ENCODE measurements at regions of chr1 and their contacts with region 1.

Region 1: DNA sequence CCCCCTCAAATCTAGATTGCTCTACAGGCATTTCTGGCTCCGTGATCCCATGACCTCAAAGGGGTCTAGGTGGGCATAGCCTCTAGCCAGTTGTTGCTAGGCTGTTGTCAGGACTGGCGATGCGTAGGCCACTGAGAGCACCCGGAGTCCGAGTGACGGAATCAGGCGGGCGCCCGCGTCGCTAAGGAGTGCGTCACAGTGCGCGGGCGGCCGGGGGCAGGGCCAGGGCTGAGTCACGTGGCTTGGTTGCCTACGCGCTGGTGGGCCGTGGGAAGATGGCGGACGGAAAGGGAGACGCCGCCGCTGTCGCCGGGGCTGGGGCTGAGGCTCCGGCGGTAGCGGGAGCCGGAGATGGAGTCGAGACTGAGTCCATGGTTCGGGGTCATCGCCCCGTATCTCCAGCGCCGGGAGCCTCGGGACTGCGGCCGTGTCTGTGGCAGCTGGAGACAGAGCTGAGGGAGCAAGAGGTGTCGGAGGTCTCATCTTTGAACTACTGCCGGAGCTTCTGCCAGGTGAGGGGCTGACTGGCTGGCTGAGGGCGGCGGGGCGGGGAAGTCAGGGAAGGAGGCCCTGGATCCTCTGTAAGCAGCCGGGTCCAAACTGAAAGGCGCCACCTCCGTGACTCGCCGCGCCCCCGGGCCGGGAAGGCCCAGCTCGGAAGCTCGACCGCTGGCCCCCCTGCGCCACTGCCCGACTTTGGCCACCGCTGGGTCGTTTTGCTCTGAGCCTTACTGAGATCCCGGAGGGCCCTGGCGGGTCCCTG is at the start of gene RLF:
- DNase-seq: peak; percentile 90 to 97 (median 94)
- H3K4me3 ChIP-seq: peak within 1 kb of the TSS; percentile 67 to 99 (median 94)
- H3K27ac ChIP-seq: peak within 1 kb of the TSS; percentile 69 to 98 (median 93)
- H3K27me3 ChIP-seq: no peaks in the 10 kb centered on the region
- CTCF ChIP-seq: peak in 20 of 56 donors; percentile 4 to 43 (median 24)
- total RNA-seq, gene RLF: 21.4 to 38.0 (median 28.7) TPM

Region 2: GRCh38 chr1:39876144-39876543 is 285.2 kb before region 1 on chr1:
- intact Hi-C with region 1: no loop called
- DNase-seq: no peak
- H3K4me3 ChIP-seq: no peak overlapping the region
- H3K27ac ChIP-seq: peak overlapping the region in 39 of 59 donors; percentile 7 to 93 (median 86)
- H3K27me3 ChIP-seq: no peaks in the 10 kb centered on the region
- CTCF ChIP-seq: no peak

Region 3: GRCh38 chr1:40096977-40097782 is 64.1 kb before region 1 on chr1 and contains the start of gene PPT1:
- intact Hi-C with region 1: loop called (anchors 5 to 10 kb)
- DNase-seq: peak; percentile 79 to 92 (median 87)
- H3K4me3 ChIP-seq: peak within 1 kb of the TSS; percentile 58 to 97 (median 81)
- H3K27ac ChIP-seq: peak within 1 kb of the TSS; percentile 66 to 97 (median 85)
- H3K27me3 ChIP-seq: no peaks in the 10 kb centered on the region
- CTCF ChIP-seq: peak in 52 of 56 donors; percentile 7 to 66 (median 40)
- total RNA-seq, gene PPT1: 72.4 to 166 (median 118) TPM

Region 4: DNA sequence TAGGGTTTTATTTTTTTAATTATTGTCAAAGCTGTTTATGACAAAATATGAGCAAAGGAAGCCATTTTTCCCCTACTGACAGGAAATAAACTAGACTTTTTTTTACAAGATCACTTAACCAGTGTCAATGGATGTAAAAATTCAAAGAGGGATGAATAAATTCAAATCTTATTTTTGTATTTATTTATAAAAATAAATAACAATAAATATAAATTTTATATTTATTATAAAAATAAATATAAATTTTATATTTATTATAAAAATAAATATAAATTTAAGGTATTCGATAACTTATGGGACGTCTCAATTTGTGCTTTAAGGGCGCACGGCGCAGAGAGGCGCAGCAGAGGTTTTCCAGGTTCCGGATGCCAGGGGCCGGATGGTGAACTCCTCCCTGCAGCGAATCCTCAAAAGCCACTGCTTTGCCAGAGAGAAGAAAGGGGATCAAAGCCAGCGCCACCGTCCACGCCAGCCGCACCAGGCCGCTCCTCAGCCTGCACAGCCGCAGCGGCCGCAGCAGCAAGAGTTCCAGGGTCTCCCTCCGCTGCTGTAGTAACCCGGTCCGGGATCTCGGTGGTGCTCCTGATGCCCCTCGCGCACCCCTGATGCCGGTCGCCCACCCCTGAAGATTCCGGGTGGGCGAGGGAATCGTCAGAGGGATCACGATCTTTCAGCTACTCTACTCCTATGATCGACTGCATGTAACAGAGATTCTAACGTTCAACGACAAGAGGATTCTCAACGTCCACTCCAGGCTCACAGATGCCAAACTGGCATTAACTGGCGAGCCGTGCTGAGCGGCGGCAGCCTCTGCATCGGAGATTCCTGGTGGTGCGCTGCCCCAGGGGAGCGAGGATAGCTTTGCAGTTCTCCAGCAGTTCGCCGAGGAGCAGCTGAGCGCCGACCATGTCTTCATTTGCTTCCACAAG is 28.7 kb before region 1 on chr1:
- intact Hi-C with region 1: no loop called
- DNase-seq: peak in 2 of 10 donors; percentile 11 to 43
- H3K4me3 ChIP-seq: peak overlapping the region in 58 of 59 donors; percentile 19 to 71 (median 47)
- H3K27ac ChIP-seq: peak overlapping the region in 1 of 59 donors; percentile 38
- H3K27me3 ChIP-seq: peaks cover 0 to 10% (median 0%) of the 10 kb centered on the region in 45 donors
- CTCF ChIP-seq: no peak

Region 5: DNA sequence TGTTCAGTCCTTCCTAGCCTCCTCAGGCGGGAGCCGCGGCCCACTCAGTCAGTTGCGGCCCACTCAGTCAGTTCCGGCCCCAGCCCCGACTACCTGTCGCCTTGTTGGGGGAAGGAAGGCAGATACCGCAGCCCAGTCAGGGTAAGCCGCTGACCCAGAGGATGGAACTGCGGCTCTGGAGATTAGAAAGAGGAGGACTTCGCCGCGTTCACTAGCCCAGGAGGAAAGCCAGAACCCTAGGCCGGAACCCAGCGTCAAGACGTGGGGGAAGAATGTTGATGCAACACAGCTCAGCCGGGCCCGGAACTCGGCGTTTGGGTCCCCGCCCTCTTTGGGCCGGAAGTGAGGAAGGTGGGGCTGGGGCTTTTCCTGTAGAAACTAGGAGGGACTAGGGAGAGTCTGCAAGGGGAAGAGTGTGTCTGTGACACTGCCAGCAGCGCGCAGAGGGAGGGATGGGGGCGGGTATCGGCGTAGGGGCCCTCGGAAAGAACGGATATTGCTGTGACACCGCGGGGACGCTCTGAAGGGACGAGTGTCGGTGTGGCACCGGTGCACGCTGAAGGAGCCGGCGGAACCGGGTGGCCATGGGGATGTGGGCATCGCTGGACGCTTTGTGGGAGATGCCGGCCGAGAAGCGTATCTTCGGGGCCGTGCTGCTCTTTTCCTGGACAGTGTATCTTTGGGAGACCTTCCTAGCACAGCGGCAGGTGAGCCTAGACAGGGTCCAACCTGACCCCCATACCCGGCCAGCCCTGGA is 96.6 kb after region 1 on chr1 and contains the start of gene ZMPSTE24:
- intact Hi-C with region 1: loop called (anchors 5 kb)
- DNase-seq: peak; percentile 91 to 97 (median 95)
- H3K4me3 ChIP-seq: peak within 1 kb of the TSS; percentile 65 to 100 (median 91)
- H3K27ac ChIP-seq: peak within 1 kb of the TSS; percentile 75 to 99 (median 93)
- H3K27me3 ChIP-seq: no peaks in the 10 kb centered on the region
- CTCF ChIP-seq: peak in 39 of 56 donors; percentile 4 to 60 (median 25)
- total RNA-seq, gene ZMPSTE24: 20.8 to 36.8 (median 28.6) TPM

Region 6: DNA sequence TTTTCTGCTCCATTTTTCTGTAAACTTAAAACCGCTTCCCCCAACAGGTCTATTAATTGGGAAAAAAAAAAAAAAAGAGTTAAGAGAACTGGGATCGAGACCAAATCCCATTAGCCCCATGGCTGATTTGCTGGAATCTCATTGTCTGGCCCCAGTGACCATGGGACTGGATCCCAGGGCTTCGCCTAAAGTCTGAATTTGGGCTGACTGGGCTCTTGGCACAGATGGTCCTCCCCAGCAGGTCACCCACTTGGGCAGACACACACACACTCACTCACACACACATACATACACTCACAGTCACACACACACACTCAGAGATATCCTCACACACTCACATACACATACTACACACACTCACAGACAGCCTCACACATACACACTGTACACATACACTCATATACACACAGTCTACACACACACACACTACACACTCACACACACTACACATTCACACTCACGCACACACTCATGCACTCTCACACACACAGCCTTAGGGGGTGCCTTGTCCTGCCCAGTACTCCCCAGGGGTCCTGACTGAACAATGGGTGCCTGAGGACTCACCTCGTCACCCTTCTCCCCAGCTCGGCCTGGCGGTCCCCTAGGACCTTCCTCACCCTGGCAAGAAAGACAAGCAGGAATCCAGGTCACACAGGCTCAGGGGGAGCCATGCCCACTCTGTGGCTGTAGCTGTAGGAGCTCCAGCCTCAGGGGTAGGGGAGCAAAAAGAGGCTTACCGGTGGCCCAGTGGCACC is 148.2 kb after region 1 on chr1:
- intact Hi-C with region 1: loop called (anchors 2 kb)
- DNase-seq: peak in 3 of 10 donors; percentile 36 to 48 (median 47)
- H3K4me3 ChIP-seq: no peak overlapping the region
- H3K27ac ChIP-seq: peak overlapping the region in 47 of 59 donors; percentile 12 to 95 (median 85)
- H3K27me3 ChIP-seq: peaks cover 0 to 1% (median 0%) of the 10 kb centered on the region in 45 donors
- CTCF ChIP-seq: no peak

Region 7: DNA sequence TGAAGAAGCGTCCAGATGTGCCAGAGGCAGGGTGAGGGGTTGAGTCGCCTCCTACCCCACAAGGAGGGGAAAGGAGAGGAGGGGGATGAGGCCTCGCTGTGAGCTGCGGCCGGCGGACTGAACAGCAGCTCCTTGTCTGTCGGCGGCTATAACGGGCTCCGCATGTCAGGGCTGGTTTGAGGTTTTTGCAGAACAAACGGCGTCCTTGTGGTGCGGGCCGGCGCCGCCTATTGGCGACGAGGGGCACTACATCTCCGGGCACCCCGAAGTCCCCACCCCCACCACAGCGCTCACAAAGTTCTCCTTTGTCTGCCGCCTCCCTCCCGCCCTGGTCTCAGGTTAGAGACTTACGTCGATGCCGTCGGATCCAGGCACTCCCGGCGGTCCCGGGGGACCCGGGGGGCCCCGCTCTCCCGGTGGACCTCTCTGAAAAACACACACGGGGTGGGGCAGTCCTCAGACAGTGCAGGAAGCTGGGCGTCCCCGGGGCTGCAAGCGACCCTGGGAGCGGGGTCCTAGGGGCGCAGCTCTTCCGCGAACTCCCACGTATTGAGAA is 154.0 kb after region 1 on chr1:
- intact Hi-C with region 1: loop called (anchors 2 kb)
- DNase-seq: peak; percentile 61 to 91 (median 89)
- H3K4me3 ChIP-seq: peak overlapping the region; percentile 43 to 85 (median 66)
- H3K27ac ChIP-seq: peak overlapping the region; percentile 76 to 100 (median 98)
- H3K27me3 ChIP-seq: peaks cover 0 to 30% (median 13%) of the 10 kb centered on the region in 45 donors
- CTCF ChIP-seq: peak; percentile 69 to 98 (median 90)

Region 8: GRCh38 chr1:40449684-40450494 is 288.6 kb after region 1 on chr1 and contains the start of gene ZFP69B:
- intact Hi-C with region 1: loop called in 1 of 2 experiments (anchors 1 kb)
- DNase-seq: peak; percentile 81 to 95 (median 89)
- H3K4me3 ChIP-seq: peak within 1 kb of the TSS; percentile 37 to 93 (median 79)
- H3K27ac ChIP-seq: peak within 1 kb of the TSS in 58 of 59 donors; percentile 28 to 95 (median 86)
- H3K27me3 ChIP-seq: no peaks in the 10 kb centered on the region
- CTCF ChIP-seq: peak in 45 of 56 donors; percentile 18 to 62 (median 36)
- total RNA-seq, gene ZFP69B: 5.1 to 18.3 (median 12.0) TPM